Activated CD4-positive, alpha-beta T cell treated with anti-CD3 and anti-CD28 coated beads for 36 hours (primary cell): ENCODE measurements at regions of chr3 and their contacts with region 1.

Region 1: DNA sequence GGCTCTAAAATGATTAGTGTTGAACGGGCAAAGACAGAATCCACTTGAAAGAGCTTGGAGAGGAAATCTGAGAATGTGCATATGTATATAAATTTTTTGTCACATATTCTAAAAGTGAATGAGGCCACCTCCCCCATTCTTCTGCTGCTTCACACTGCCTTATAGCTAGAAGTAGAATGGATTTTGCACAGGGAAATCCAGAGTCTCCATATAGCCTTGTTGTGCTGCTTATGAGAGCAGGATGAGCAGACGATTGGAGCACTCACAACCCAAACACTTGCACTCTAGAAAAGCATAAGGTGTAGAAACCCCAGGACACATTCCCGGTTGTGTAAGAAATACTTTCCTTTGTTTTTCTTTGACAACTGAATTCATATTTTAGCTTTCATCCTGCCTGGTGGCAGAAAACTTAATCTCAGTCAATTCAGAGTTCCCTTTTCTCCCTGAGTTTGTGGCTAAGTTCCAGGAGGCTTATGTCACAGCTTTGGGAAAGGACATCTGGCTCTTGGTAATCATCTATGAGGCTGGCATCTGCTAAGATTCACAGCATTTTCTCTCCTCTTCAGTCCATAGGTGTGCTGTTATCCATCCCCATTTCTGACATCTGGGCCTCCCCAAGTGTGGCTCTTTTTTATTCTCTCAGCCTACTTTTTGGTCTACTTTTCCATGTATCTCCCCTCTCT is 188.4 kb upstream of the PFN2 start:
- DNase-seq: no peak
- ATAC-seq: no peak
- H3K4me3 Mint-ChIP-seq: no peak overlapping the region
- H3K27ac Mint-ChIP-seq: no peak overlapping the region
- H3K4me1 Mint-ChIP-seq: no peaks in the 10 kb centered on the region
- H3K27me3 Mint-ChIP-seq: peaks cover 12% of the 10 kb centered on the region

Region 2: GRCh38 chr3:150075417-150075865 is 83.6 kb before region 1 on chr3:
- CTCF ChIA-PET with region 1: no interaction called
- POLR2A ChIA-PET with region 1: interaction called, 11 read pairs
- intact Hi-C with region 1: no loop called
- DNase-seq: no peak
- ATAC-seq: no peak
- H3K4me3 Mint-ChIP-seq: no peak overlapping the region
- H3K27ac Mint-ChIP-seq: no peak overlapping the region
- H3K4me1 Mint-ChIP-seq: peaks cover 9% of the 10 kb centered on the region
- H3K27me3 Mint-ChIP-seq: peaks cover 18% of the 10 kb centered on the region